ENCODE measurements at regions of chr7 and their contacts with region 1.

Region 1: GRCh38 chr7:151315038-151315655 is 26.5 kb upstream of the NUB1 start:
- DNase-seq: peak; percentile 38
- H3K4me3 ChIP-seq: no peak overlapping the region
- H3K27ac ChIP-seq: no peak overlapping the region
- H3K4me1 ChIP-seq: peaks cover 12% of the 10 kb centered on the region
- H3K27me3 ChIP-seq: no peaks in the 10 kb centered on the region
- CTCF ChIP-seq: peak; percentile 90

Region 2: GRCh38 chr7:151351027-151351426 is 35.9 kb after region 1 on chr7:
- intact Hi-C with region 1: loop called (anchors 2 kb)
- DNase-seq: no peak
- H3K4me3 ChIP-seq: no peak overlapping the region
- H3K27ac ChIP-seq: no peak overlapping the region
- H3K4me1 ChIP-seq: peaks cover 33% of the 10 kb centered on the region
- H3K27me3 ChIP-seq: no peaks in the 10 kb centered on the region
- CTCF ChIP-seq: peak; percentile 11